ENCODE measurements at regions of chr10 and their contacts with region 1.

Region 1: GRCh38 chr10:99620713-99621453 is 644 bp upstream of the SLC25A28 start:
- DNase-seq: peak; percentile 94 to 99
- H3K4me3 ChIP-seq: peak overlapping the region; percentile 42
- CTCF ChIP-seq: no peak
- POLR2A ChIP-seq: no peak

Region 2: DNA sequence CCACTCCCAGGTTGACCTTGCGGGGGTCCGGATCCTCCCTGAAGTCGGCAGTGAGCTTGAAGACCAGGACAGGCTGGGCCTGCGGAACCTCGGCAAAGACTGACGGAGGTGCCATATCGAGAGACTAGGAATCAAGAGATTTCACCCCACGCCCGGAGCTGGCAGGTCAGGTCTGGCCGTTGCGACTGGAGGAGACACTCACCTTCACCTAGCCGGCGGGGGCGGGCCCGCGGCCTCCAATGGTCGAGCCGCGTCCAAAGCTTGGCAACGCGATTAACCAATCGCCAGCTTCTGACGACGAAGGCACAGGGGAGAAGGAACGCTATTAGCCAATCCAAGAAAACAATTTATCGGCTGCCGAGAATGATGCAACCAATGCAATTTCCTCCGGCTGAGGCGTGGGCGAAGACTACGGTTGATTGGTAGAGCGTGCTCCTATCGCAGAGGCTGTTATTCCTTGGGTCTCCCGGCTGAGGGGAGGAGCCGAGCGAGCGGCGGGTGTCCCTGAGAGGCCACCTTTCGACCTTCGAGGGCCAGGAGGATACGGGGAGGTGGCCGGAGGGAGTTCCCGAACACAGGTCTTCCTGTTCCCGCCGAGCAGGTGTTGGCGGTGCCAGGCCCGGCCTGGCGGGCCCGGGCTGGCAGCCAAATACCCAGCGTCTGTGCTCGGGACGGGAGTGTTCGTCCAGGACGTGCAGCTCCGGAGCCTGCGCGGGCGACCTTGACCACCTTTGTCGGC is 190.3 kb before region 1 on chr10 and contains the start of gene GOT1:
- intact Hi-C with region 1: loop called (anchors 10 kb)
- DNase-seq: peak; percentile 98 to 99
- H3K4me3 ChIP-seq: peak within 1 kb of the TSS; percentile 67
- CTCF ChIP-seq: no peak
- POLR2A ChIP-seq: peak in 1 of 2 donors; percentile 70
- total RNA-seq, gene GOT1: 8.5 to 54.8 (median 24.3) TPM

Region 3: GRCh38 chr10:99685597-99685967 is 64.7 kb after region 1 on chr10:
- intact Hi-C with region 1: loop called (anchors 10 kb)
- DNase-seq: no peak
- H3K4me3 ChIP-seq: no peak overlapping the region
- CTCF ChIP-seq: no peak
- POLR2A ChIP-seq: no peak

Region 4: GRCh38 chr10:99711129-99711719 is 90.3 kb after region 1 on chr10:
- intact Hi-C with region 1: no loop called
- DNase-seq: peak in 1 of 2 donors; percentile 34
- H3K4me3 ChIP-seq: no peak overlapping the region
- CTCF ChIP-seq: no peak
- POLR2A ChIP-seq: no peak

Measured in lower leg skin (tissue), 4 donors.